OCI-LY7 (cell line): ENCODE measurements at regions of chr19 and their contacts with region 1.

Region 1: DNA sequence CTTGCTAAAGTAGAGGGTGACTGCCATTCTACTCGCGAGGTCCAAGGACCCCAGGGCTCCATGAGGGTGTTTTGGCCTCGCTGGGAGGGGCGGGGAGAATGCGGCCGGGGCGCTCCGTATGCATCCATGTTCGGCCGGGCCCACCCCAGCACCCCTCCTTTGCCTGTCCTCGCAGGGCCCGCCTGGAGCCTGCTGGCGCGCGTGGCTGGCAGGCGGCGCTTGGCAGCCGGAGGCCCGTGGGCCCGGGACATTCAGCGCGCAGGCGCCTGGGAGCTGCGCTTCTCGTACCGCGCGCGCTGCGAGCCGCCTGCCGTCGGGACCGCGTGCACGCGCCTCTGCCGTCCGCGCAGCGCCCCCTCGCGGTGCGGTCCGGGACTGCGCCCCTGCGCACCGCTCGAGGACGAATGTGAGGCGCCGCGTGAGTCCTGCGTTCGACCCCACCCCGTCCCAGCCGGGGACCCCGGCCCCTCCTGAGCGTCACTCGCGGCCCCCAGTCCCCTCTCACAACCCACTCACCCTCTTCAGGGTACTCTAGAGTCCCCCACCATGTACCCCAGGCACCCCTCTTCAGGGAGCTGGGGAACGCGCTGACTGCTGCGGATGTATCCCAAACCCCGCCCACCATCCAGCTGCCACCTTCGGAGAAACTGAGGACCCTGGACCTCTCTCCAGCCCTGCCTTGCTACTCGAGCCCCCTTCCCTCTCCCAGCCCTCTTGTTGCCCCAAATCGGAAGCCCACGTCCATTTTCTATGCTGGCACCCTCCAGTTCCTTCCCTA is 4.1 kb downstream of the DLL3 start:
- DNase-seq: peak; percentile 92
- H3K4me3 ChIP-seq: no peak overlapping the region
- H3K27ac ChIP-seq: no peak overlapping the region
- H3K4me1 ChIP-seq: peaks cover 22% of the 10 kb centered on the region
- CTCF ChIP-seq: peak; percentile 85

Region 2: DNA sequence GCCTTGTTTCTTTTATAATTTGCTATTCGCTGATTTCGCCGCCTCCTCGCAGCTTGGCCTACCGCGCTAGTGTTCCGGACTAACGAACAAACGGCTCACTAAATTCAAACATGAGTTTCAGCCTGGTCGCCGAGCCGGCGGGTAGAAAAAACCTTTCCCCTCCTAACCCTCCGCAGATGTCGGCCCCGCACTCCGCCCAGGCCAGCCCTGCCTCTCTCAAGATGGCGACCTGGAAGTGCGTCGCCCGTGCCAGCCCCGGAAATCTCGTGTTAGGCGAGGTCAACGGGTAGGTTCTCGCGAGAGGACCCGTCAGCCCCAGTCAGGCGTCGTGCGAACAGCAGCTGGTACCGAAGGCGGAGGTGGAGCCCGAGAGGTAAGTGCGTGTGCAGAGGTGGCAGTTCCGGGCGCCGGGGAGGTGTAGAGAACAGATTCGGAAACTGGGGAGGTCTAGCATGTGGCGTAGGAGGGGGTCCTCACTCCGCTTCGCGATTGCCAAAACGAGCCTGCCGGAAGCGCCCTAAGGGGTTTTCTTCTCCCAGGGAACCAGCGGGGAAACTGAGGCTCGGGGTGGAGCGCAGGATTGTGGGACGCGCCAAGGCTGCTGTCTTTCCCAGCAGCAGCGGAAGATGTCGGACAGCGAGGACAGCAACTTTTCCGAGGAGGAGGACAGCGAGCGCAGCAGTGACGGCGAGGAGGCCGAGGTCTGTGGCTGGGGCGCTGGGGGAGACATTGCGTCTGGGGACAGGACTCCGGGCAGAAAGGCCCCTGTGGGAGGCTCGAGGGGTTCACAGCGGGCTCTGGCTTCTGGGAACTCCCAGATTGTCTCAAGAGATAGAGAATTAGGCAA is 57.3 kb before region 1 on chr19 and contains the start of gene SUPT5H:
- CTCF ChIA-PET with region 1: interaction called, 13 read pairs
- POLR2A ChIA-PET with region 1: no interaction called
- intact Hi-C with region 1: loop called (anchors 1 kb)
- DNase-seq: peak; percentile 100
- H3K4me3 ChIP-seq: peak within 1 kb of the TSS; percentile 92
- H3K27ac ChIP-seq: peak within 1 kb of the TSS; percentile 86
- H3K4me1 ChIP-seq: peaks cover 56% of the 10 kb centered on the region
- CTCF ChIP-seq: no peak
- total RNA-seq, gene SUPT5H: 70.1 and 74.6 TPM in 2 replicates

Region 3: DNA sequence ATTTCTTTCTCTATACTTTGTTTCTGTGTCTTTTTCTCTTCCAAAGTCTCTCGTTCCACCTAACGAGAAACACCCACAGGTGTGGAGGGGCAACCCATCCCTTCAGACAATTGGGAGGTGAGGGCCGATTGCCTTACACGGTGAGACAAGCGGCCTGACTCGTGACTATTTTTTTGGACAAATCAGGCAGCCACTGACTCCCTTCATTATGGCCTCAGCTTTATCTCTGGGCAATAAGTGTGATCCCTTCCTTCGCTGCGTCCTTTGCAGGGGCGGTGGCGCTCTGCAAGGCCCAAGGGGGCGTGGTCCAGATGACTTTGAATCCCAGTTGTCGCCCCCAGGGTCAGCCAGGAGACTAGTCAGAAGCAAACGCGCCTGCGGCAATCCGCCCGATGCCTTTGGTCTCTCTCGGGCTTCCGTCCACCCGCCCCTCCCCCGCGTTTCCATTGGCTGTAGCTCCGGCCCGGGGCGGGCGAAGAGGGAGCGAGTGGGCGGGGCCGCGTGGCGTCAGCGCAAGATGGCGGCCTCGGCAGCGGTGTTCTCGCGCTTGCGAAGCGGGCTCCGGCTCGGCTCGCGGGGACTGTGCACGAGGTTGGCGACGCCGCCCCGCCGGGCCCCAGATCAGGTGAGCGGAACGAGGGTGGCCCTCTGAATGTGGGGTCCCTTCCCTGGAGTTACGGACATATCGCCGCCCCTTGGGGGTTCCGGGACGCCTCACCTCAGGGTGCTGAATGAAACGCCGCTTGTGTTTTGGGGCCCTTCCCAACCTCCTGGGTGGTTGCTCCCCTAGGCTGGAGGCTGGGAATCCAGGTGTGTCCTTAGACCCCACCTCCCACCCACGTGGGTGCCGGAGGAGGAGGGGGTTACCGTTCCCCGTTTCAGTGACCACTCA is 22.2 kb before region 1 on chr19 and contains the start of gene TIMM50:
- CTCF ChIA-PET with region 1: interaction called, 11 read pairs
- POLR2A ChIA-PET with region 1: no interaction called
- intact Hi-C with region 1: no loop called
- DNase-seq: peak; percentile 98
- H3K4me3 ChIP-seq: peak within 1 kb of the TSS; percentile 91
- H3K27ac ChIP-seq: peak within 1 kb of the TSS; percentile 57
- H3K4me1 ChIP-seq: peaks cover 17% of the 10 kb centered on the region
- CTCF ChIP-seq: no peak
- total RNA-seq, gene TIMM50: 98.1 and 116 TPM in 2 replicates

Region 4: DNA sequence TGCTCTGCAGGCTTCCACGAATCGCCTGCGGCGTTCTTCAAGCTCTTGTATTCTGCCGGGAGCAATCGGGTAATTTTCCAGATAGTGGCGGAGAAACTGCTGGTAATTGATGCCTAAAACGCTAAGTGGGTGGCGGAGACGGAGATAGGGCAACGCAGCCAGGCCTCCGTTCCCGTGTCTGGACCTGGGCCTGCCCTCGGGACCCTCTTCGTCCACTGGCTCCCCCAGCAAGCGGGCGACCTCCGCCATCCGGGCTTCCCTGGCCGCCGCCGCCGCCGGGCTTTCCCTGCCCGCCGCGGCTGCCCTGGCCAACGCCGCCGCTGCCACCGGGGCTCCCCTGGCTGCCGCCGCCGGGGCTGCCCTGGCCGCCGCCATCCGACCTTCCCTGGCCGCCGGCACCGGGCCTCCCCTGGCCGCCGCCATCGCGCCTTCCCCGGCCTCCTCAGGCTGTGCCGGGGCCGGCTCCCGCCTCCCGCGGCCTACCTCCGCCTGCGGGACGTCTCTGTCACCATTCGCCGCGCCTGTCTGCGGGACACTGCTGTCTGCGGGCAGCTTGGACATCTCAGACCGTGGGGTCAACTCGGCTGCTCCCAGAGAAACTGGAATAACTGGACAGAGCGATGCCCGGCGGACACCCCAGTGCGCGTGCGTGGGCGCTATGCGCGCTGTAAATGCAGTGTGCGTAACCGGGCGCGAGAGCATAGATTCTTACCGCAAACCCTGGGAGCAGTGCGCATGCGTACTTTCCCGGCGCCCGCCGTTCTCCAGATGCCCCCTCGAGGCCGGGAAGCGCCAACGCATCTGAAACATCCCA is 36.9 kb after region 1 on chr19 and contains the start of gene EID2:
- CTCF ChIA-PET with region 1: interaction called, 11 read pairs
- POLR2A ChIA-PET with region 1: no interaction called
- intact Hi-C with region 1: no loop called
- DNase-seq: peak; percentile 95
- H3K4me3 ChIP-seq: peak within 1 kb of the TSS; percentile 86
- H3K27ac ChIP-seq: peak within 1 kb of the TSS; percentile 30
- H3K4me1 ChIP-seq: peaks cover 42% of the 10 kb centered on the region
- CTCF ChIP-seq: no peak; the same call in 1 of the 2 replicates
- total RNA-seq, gene EID2: 19.1 and 22.9 TPM in 2 replicates